ENCODE measurements at regions of chr1 and their contacts with region 1.

Region 1: GRCh38 chr1:67685067-67685557 is at the start of gene GADD45A:
- DNase-seq: peak; percentile 93 to 98 (median 95)
- H3K4me3 ChIP-seq: peak within 1 kb of the TSS; percentile 69 to 81
- H3K4me3 Mint-ChIP-seq: peak within 1 kb of the TSS; percentile 96 to 99 (median 98)
- H3K27ac ChIP-seq: peak within 1 kb of the TSS; percentile 60
- H3K27ac Mint-ChIP-seq: peak within 1 kb of the TSS; percentile 88 to 97 (median 96)
- H3K4me1 ChIP-seq: peaks cover 19% of the 10 kb centered on the region
- H3K4me1 Mint-ChIP-seq: peaks cover 11 to 24% (median 18%) of the 10 kb centered on the region in 4 donors
- H3K27me3 ChIP-seq: no peaks in the 10 kb centered on the region
- H3K27me3 Mint-ChIP-seq: no peaks in the 10 kb centered on the region
- total RNA-seq, gene GADD45A: 25.3 to 26.8 TPM

Region 2: DNA sequence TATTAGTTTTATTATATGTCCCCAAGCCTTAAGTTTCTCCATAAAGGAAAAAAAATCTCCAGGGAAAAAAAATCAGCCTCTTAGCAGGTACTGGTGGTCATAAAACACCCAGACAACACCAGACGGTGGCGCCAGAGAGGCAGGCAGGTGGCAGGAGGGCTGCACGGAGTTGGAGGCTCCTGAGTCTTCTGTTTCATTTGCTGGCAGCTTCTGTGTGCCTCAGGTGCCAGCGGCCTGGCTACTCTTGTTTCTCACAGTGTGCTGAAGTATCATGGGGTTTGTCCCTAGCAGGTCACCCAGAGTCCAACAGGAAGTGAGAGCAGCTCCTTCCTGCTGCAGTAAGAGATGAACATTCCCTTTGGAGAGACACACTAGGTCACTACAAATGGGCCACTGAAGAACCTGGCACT is 123.4 kb before region 1 on chr1:
- CTCF ChIA-PET with region 1: interaction called, 12 read pairs
- POLR2A ChIA-PET with region 1: no interaction called
- intact Hi-C with region 1: no loop called
- DNase-seq: peak; percentile 67 to 72 (median 70)
- H3K4me3 ChIP-seq: no peak overlapping the region
- H3K4me3 Mint-ChIP-seq: no peak overlapping the region
- H3K27ac ChIP-seq: no peak overlapping the region
- H3K27ac Mint-ChIP-seq: no peak overlapping the region
- H3K4me1 ChIP-seq: no peaks in the 10 kb centered on the region
- H3K4me1 Mint-ChIP-seq: peaks cover 0 to 6% (median 2%) of the 10 kb centered on the region in 4 donors
- H3K27me3 ChIP-seq: no peaks in the 10 kb centered on the region
- H3K27me3 Mint-ChIP-seq: peaks cover 3 to 11% of the 10 kb centered on the region in 2 donors

Region 3: GRCh38 chr1:67674260-67675011 is 10.7 kb before region 1 on chr1:
- CTCF ChIA-PET with region 1: interaction called, 8 read pairs
- POLR2A ChIA-PET with region 1: interaction called, 49 read pairs
- intact Hi-C with region 1: loop called (anchors 1 kb)
- DNase-seq: peak; percentile 55 to 82 (median 69)
- H3K4me3 ChIP-seq: no peak overlapping the region
- H3K4me3 Mint-ChIP-seq: peak overlapping the region in 7 of 8 donors; percentile 14 to 55 (median 36)
- H3K27ac ChIP-seq: peak overlapping the region; percentile 4
- H3K27ac Mint-ChIP-seq: peak overlapping the region; percentile 20 to 92 (median 61)
- H3K4me1 ChIP-seq: peaks cover 22% of the 10 kb centered on the region
- H3K4me1 Mint-ChIP-seq: peaks cover 12 to 23% (median 16%) of the 10 kb centered on the region in 4 donors
- H3K27me3 ChIP-seq: no peaks in the 10 kb centered on the region
- H3K27me3 Mint-ChIP-seq: peaks cover 6% of the 10 kb centered on the region in 2 donors

Region 4: GRCh38 chr1:67713057-67713846 is 28.1 kb after region 1 on chr1:
- CTCF ChIA-PET with region 1: no interaction called
- POLR2A ChIA-PET with region 1: no interaction called
- intact Hi-C with region 1: no loop called
- DNase-seq: no peak
- H3K4me3 ChIP-seq: no peak overlapping the region
- H3K4me3 Mint-ChIP-seq: no peak overlapping the region
- H3K27ac ChIP-seq: no peak overlapping the region
- H3K27ac Mint-ChIP-seq: no peak overlapping the region
- H3K4me1 ChIP-seq: no peaks in the 10 kb centered on the region
- H3K4me1 Mint-ChIP-seq: no peaks in the 10 kb centered on the region
- H3K27me3 ChIP-seq: no peaks in the 10 kb centered on the region
- H3K27me3 Mint-ChIP-seq: no peaks in the 10 kb centered on the region

Region 5: DNA sequence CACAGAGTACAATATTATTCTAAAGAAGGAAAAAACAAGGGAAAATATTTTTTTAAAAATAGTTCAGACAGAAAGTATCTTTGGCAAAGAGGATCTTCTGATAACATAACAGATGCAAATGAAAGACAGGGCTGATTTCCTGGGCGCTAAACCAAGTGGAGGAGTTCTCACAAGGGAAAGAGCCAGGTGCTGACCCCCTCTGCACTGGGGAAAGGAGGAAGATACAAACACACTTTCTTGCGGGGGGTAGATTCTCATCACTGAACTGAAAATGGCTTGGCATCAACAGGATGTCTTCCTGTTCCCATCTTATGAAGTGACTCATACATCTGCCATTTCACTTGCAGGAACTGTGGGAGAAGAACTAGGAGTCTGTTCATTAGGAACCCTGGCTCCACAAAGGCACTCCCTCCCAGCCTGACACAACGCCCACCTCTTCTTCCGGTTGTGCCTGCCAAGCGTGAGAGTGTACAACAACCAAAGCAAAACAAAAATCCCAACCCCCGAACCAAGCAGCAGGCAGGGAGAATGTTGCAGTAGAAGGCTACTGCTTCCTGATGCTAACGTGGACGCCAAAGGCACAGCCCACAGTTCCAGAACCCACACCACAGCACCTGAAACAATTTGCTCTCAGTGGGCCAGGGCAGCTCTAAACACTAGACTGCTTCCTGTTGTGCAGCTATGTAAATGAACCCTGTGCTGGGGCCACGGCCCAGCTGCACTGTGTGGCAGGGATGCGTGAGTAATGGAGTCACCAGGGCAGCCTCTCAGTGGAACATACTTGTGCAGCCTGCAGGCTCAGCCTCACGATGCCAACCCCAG is 50.9 kb after region 1 on chr1:
- CTCF ChIA-PET with region 1: interaction called, 3 read pairs
- POLR2A ChIA-PET with region 1: interaction called, 31 read pairs
- intact Hi-C with region 1: loop called (anchors 1 kb)
- DNase-seq: peak in 4 of 5 donors; percentile 14 to 30 (median 20)
- H3K4me3 ChIP-seq: peak overlapping the region in 1 of 2 donors; percentile 54
- H3K4me3 Mint-ChIP-seq: peak overlapping the region; percentile 56 to 90 (median 83)
- H3K27ac ChIP-seq: no peak overlapping the region
- H3K27ac Mint-ChIP-seq: peak overlapping the region; percentile 44 to 92 (median 74)
- H3K4me1 ChIP-seq: peaks cover 18% of the 10 kb centered on the region
- H3K4me1 Mint-ChIP-seq: peaks cover 11 to 13% (median 13%) of the 10 kb centered on the region in 4 donors
- H3K27me3 ChIP-seq: no peaks in the 10 kb centered on the region
- H3K27me3 Mint-ChIP-seq: no peaks in the 10 kb centered on the region

Region 6: DNA sequence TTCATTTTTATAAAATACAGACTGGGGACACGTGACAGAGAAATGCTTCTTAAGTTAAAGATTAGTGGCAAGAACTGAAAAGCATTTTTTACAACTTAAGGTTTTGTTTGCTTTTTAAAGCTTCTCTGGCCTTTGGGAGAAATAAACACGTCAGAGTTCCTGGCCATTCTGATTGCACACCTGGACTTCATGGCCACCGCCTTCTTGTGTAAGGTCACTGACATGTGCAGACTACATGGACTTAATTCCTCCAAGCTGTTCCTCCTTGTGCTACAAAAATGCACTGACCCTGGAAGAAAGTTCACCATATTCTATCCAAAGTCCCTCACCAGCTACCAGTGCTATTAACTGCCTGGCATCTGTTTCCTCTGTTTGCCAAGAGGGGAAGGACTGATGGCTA is 56.0 kb after region 1 on chr1:
- CTCF ChIA-PET with region 1: interaction called, 3 read pairs
- POLR2A ChIA-PET with region 1: interaction called, 31 read pairs
- intact Hi-C with region 1: loop called (anchors 1 kb)
- DNase-seq: no peak
- H3K4me3 ChIP-seq: no peak overlapping the region
- H3K4me3 Mint-ChIP-seq: no peak overlapping the region
- H3K27ac ChIP-seq: no peak overlapping the region
- H3K27ac Mint-ChIP-seq: no peak overlapping the region
- H3K4me1 ChIP-seq: peaks cover 9% of the 10 kb centered on the region
- H3K4me1 Mint-ChIP-seq: peaks cover 6 to 7% (median 7%) of the 10 kb centered on the region in 4 donors
- H3K27me3 ChIP-seq: no peaks in the 10 kb centered on the region
- H3K27me3 Mint-ChIP-seq: peaks cover 2 to 8% of the 10 kb centered on the region in 2 donors

Region 7: GRCh38 chr1:67773462-67773861 is 88.3 kb after region 1 on chr1:
- CTCF ChIA-PET with region 1: no interaction called
- POLR2A ChIA-PET with region 1: no interaction called
- intact Hi-C with region 1: no loop called
- DNase-seq: no peak
- H3K4me3 ChIP-seq: no peak overlapping the region
- H3K4me3 Mint-ChIP-seq: no peak overlapping the region
- H3K27ac ChIP-seq: no peak overlapping the region
- H3K27ac Mint-ChIP-seq: no peak overlapping the region
- H3K4me1 ChIP-seq: no peaks in the 10 kb centered on the region
- H3K4me1 Mint-ChIP-seq: no peaks in the 10 kb centered on the region
- H3K27me3 ChIP-seq: peaks cover 6% of the 10 kb centered on the region
- H3K27me3 Mint-ChIP-seq: peaks cover 13 to 30% of the 10 kb centered on the region in 2 donors

Measured in CD4-positive, alpha-beta memory T cell (primary cell).